ENCODE measurements at regions of chr6 and their contacts with region 1.

Region 1: DNA sequence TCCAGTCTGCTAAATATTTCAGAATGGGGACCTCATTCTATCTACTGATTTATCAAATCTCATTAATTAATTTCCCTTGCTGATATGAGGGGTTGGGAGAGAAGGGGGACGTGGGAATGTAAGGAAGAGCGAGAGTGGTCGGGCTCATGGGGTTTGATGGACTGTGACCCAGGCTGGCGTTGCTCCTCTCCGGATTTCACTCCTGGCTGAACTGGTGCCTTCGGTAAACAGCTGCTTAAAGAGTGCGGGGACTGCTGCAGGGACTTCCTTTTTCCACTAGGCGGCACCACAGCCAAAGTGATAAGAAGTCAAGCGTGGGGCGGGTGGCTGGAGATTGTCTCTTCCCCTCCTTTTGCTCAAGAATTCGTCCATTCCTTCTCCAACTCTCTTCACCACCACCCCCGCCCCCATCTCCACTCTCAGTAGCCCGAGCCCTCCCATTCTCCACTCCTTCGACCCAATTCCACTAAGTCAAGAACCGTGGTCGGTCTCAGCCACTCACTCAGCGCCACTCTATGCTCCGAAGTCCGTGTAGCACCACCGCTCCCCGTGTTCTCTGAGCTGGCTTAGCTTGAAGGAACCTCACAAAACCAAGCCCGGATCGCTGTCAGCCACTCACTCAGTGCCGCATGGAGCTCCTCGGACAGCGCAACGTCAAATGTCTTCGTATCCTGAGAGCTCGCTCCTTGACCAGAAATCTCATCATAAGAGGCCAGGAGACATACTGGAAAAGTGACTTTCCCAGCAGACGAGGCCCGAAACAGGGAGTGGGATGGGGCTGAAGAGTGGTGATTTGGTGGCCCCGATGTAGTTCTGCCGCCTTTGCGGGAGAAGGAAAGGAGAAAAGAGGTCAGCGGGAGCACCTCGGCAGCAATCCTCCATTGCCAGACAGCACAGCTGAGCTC is 9.7 kb downstream of the TRIM31 start:
- DNase-seq: peak; percentile 92
- ATAC-seq: peak; percentile 82
- H3K4me3 ChIP-seq: peak overlapping the region in 4 of 5 experiments; percentile 44 to 64 (median 54)
- H3K4me3 Mint-ChIP-seq: peak overlapping the region; percentile 91
- H3K27ac ChIP-seq: peak overlapping the region in 1 of 2 donors; percentile 22
- H3K27ac Mint-ChIP-seq: peak overlapping the region; percentile 59
- H3K4me1 ChIP-seq: peaks cover 37 to 40% of the 10 kb centered on the region in 2 donors
- H3K4me1 Mint-ChIP-seq: peaks cover 32% of the 10 kb centered on the region
- H3K27me3 ChIP-seq: peaks cover 3 to 65% (median 51%) of the 10 kb centered on the region in 4 experiments
- H3K27me3 Mint-ChIP-seq: peaks cover 52% of the 10 kb centered on the region
- CTCF ChIP-seq: peak; percentile 92

Region 2: DNA sequence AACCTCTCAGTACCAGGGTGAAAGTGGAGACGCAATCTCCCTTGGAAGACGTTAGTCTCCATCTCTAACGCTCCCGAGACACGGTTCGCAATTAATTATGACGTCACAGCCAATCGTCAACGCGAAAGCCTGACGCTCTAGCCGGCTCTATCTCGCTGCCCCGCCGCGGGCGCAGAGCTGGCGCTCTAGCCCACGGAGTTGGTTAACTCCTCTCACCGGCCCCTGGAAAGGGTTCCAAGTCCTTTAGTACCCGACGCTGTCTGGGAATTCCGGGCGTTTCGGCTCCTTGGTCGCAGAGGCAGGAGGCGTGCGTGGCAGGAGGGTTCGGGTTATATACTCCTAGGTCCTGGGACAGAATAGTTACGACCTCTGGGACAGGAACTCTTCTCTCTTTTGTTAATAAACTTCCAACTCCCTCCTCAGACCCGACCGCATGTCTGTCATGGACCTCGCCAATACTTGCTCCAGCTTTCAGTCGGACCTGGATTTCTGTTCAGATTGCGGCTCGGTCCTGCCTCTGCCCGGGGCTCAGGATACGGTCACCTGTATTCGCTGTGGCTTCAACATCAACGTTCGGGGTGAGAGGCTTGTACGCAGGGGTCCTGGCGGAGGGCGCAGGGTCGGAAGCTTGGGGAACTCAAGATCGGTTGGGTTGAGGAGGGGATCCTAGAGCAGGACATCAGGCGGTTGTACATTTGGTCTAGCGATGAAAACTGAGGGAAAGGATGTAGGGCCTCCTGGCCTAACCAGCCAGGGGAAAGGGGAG is 41.9 kb before region 1 on chr6 and contains the start of gene POLR1H:
- CTCF ChIA-PET with region 1: interaction called, 10 read pairs
- POLR2A ChIA-PET with region 1: interaction called, 10 read pairs
- intact Hi-C with region 1: loop called (anchors 1 kb)
- DNase-seq: peak; percentile 95
- ATAC-seq: peak; percentile 90
- H3K4me3 ChIP-seq: peak within 1 kb of the TSS; percentile 80 to 100 (median 92)
- H3K4me3 Mint-ChIP-seq: peak within 1 kb of the TSS; percentile 100
- H3K27ac ChIP-seq: peak within 1 kb of the TSS; percentile 95 to 97
- H3K27ac Mint-ChIP-seq: peak within 1 kb of the TSS; percentile 99
- H3K4me1 ChIP-seq: peaks cover 25 to 30% of the 10 kb centered on the region in 2 donors
- H3K4me1 Mint-ChIP-seq: peaks cover 41% of the 10 kb centered on the region
- H3K27me3 ChIP-seq: no peaks in the 10 kb centered on the region
- H3K27me3 Mint-ChIP-seq: no peaks in the 10 kb centered on the region
- CTCF ChIP-seq: no peak
- total RNA-seq, gene POLR1H: 38.8 and 39.7 TPM in 2 replicates

Region 3: GRCh38 chr6:30087876-30088275 is 15.3 kb before region 1 on chr6:
- CTCF ChIA-PET with region 1: interaction called, 21 read pairs
- POLR2A ChIA-PET with region 1: no interaction called
- intact Hi-C with region 1: no loop called
- DNase-seq: no peak
- ATAC-seq: no peak
- H3K4me3 ChIP-seq: no peak overlapping the region
- H3K4me3 Mint-ChIP-seq: no peak overlapping the region
- H3K27ac ChIP-seq: no peak overlapping the region
- H3K27ac Mint-ChIP-seq: no peak overlapping the region
- H3K4me1 ChIP-seq: no peaks in the 10 kb centered on the region
- H3K4me1 Mint-ChIP-seq: no peaks in the 10 kb centered on the region
- H3K27me3 ChIP-seq: peaks cover 0 to 51% (median 41%) of the 10 kb centered on the region in 4 experiments
- H3K27me3 Mint-ChIP-seq: peaks cover 59% of the 10 kb centered on the region
- CTCF ChIP-seq: no peak

Region 4: DNA sequence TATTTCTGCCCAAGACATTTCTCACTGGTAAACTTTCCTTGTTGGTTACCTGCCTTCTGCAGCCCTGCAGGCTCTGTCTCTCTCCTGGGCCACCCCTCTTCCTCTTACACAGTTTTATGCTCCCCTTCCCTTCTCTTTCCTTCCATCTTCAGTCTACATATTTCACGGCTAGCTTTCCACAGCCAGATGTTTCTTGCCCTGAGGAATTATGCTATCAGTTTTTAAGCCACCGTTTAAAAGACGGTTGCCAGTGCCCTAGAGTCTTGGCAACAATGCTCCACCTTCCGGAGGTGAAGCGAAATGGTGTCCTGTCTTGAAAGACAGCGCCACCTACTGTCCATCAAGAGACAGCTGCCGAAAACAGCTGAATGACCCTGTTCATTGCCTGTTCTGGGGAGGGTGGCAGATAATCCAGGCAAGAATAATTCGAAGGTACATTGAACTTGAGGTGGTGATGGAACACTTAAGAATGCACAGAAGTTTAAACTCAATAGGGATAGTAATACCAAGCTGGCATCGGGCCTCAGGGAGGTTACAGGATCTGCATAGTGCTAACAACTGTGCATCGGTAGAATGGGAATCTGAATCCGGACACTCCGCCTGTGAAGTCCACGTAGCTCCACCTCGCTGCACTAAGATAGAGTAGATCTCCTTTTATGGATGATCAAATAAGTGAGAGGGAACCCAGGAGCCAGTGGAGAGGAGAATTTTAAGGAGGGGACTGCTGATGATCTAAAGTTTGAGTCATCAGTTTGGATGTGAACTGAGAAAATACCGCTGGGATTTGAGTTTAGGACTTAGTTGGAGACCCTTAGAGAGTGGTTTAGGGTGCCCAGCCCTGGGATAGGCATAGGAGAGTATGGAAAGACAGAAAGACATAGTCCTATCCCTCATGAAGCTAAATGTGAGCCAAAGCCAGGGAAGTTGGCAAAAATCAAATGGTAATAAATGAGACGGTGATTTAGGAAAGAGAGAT is 28.0 kb after region 1 on chr6:
- CTCF ChIA-PET with region 1: interaction called, 194 read pairs
- POLR2A ChIA-PET with region 1: interaction called, 7 read pairs
- intact Hi-C with region 1: loop called (anchors 1 kb)
- DNase-seq: peak; percentile 87
- ATAC-seq: peak; percentile 92
- H3K4me3 ChIP-seq: no peak overlapping the region
- H3K4me3 Mint-ChIP-seq: no peak overlapping the region
- H3K27ac ChIP-seq: no peak overlapping the region
- H3K27ac Mint-ChIP-seq: no peak overlapping the region
- H3K4me1 ChIP-seq: peaks cover 13 to 18% of the 10 kb centered on the region in 2 donors
- H3K4me1 Mint-ChIP-seq: peaks cover 12% of the 10 kb centered on the region
- H3K27me3 ChIP-seq: peaks cover 0 to 55% (median 46%) of the 10 kb centered on the region in 4 experiments
- H3K27me3 Mint-ChIP-seq: peaks cover 60% of the 10 kb centered on the region
- CTCF ChIP-seq: peak; percentile 100

Region 5: GRCh38 chr6:30169658-30170614 is 66.7 kb after region 1 on chr6:
- CTCF ChIA-PET with region 1: interaction called, 4 read pairs
- POLR2A ChIA-PET with region 1: no interaction called
- intact Hi-C with region 1: loop called (anchors 2 kb)
- DNase-seq: peak; percentile 63
- ATAC-seq: peak; percentile 79
- H3K4me3 ChIP-seq: no peak overlapping the region
- H3K4me3 Mint-ChIP-seq: no peak overlapping the region
- H3K27ac ChIP-seq: no peak overlapping the region
- H3K27ac Mint-ChIP-seq: no peak overlapping the region
- H3K4me1 ChIP-seq: peaks cover 8 to 12% of the 10 kb centered on the region in 2 donors
- H3K4me1 Mint-ChIP-seq: peaks cover 4% of the 10 kb centered on the region
- H3K27me3 ChIP-seq: peaks cover 0 to 49% (median 33%) of the 10 kb centered on the region in 4 experiments
- H3K27me3 Mint-ChIP-seq: peaks cover 67% of the 10 kb centered on the region
- CTCF ChIP-seq: peak; percentile 83

Region 6: GRCh38 chr6:30227242-30227722 is 124.1 kb after region 1 on chr6:
- CTCF ChIA-PET with region 1: no interaction called
- POLR2A ChIA-PET with region 1: no interaction called
- intact Hi-C with region 1: no loop called
- DNase-seq: no peak
- ATAC-seq: no peak
- H3K4me3 ChIP-seq: no peak overlapping the region
- H3K4me3 Mint-ChIP-seq: no peak overlapping the region
- H3K27ac ChIP-seq: no peak overlapping the region
- H3K27ac Mint-ChIP-seq: no peak overlapping the region
- H3K4me1 ChIP-seq: no peaks in the 10 kb centered on the region
- H3K4me1 Mint-ChIP-seq: no peaks in the 10 kb centered on the region
- H3K27me3 ChIP-seq: no peaks in the 10 kb centered on the region
- H3K27me3 Mint-ChIP-seq: peaks cover 22% of the 10 kb centered on the region
- CTCF ChIP-seq: no peak

Region 7: GRCh38 chr6:30259140-30260035 is 156.2 kb after region 1 on chr6:
- CTCF ChIA-PET with region 1: no interaction called
- POLR2A ChIA-PET with region 1: no interaction called
- intact Hi-C with region 1: loop called (anchors 2 kb)
- DNase-seq: peak; percentile 94
- ATAC-seq: peak; percentile 96
- H3K4me3 ChIP-seq: peak overlapping the region; percentile 25 to 100 (median 84)
- H3K4me3 Mint-ChIP-seq: peak overlapping the region; percentile 99
- H3K27ac ChIP-seq: peak overlapping the region; percentile 93 to 98
- H3K27ac Mint-ChIP-seq: peak overlapping the region; percentile 98
- H3K4me1 ChIP-seq: peaks cover 19 to 27% of the 10 kb centered on the region in 2 donors
- H3K4me1 Mint-ChIP-seq: peaks cover 32% of the 10 kb centered on the region
- H3K27me3 ChIP-seq: no peaks in the 10 kb centered on the region
- H3K27me3 Mint-ChIP-seq: no peaks in the 10 kb centered on the region
- CTCF ChIP-seq: peak; percentile 41

Region 8: DNA sequence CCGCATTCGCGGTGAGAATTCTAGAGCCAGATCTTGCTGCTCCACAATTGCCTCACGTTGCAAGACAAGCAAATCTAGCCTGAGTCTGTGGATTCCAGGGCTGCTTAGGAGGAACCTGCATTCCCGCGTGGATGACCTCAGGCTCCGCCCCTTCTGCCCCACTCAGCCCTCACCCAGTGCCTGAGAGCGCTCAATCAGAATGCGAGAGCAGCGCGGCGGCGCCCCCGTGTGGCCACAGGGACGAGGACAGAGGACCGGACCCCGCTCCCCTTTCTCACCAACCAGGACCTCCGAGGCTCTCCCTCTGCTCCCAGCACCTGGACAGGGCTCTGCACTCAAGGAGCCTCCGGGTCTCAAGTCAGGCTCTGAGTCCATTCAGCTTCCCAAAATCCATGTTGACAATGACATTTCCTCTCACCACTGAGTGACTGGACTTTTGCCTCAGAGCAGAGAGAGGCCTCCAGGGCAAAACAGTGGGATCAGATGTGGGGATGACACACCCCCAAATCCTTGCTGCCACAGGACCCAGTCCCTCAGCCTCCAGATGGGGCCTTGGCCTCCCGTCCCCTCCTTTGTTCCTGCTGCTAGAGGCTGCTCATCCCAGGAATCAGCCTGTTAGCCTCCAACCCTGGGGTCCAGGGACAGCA is 293.7 kb after region 1 on chr6:
- CTCF ChIA-PET with region 1: interaction called, 4 read pairs
- POLR2A ChIA-PET with region 1: no interaction called
- intact Hi-C with region 1: loop called (anchors 1 kb)
- DNase-seq: peak; percentile 88
- ATAC-seq: peak; percentile 100
- H3K4me3 ChIP-seq: no peak overlapping the region
- H3K4me3 Mint-ChIP-seq: no peak overlapping the region
- H3K27ac ChIP-seq: no peak overlapping the region
- H3K27ac Mint-ChIP-seq: no peak overlapping the region
- H3K4me1 ChIP-seq: peaks cover 10 to 13% of the 10 kb centered on the region in 2 donors
- H3K4me1 Mint-ChIP-seq: peaks cover 6% of the 10 kb centered on the region
- H3K27me3 ChIP-seq: peaks cover 0 to 39% (median 16%) of the 10 kb centered on the region in 4 experiments
- H3K27me3 Mint-ChIP-seq: peaks cover 54% of the 10 kb centered on the region
- CTCF ChIP-seq: peak; percentile 89